Sigmoid colon (tissue), 7 donors: ENCODE measurements at regions of chr6 and their contacts with region 1.

Region 1: DNA sequence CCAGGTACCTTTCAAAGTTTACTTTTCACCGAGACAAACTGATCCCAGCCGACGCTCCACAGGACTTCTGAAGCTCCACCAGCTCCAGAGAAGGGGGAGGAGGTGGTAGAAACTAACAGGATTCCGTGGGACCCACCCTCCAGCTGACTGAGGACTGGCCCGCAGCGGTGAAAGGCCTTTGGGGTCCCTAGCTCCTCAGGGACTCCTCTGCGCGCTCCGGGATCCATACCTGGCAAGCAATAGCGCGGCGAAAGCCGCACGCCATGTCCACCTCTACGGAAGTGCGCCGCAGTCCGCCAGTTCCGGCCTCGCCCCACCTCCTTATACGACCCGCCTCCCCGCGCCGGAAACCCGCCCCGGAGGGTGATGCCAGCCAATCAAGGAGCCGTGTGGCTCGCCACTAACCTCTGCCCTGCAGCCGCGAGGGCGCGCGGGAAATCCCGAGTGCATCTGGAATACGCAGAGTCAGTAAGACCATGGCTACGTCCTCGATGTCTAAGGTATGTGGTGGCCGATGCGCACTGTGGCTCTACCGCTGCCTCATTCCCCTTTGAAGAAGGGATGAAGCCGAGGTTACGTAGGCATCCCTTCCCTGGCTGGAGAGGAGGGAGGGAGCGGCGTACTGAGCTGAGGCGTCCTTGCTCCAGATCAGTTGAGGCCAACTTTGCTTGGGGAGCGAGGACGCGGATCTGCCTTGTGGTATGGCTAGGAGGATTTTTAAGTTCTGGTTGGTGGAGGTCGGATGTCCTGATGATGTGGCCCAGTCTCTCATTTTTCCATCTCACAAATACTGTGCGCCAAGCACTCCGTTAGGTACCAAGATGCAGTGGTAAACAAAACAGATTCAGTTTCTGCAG is at the starts of genes ORC3 and RARS2:
- DNase-seq: peak; percentile 98
- H3K4me3 ChIP-seq: peak within 1 kb of the TSS; percentile 81 to 89 (median 84)
- H3K27ac ChIP-seq: peak within 1 kb of the TSS; percentile 81 to 88 (median 87)
- H3K4me1 ChIP-seq: peaks cover 0 to 50% (median 28%) of the 10 kb centered on the region in 4 donors
- H3K27me3 ChIP-seq: no peaks in the 10 kb centered on the region
- CTCF ChIP-seq: no peak
- EP300 ChIP-seq: no peak
- POLR2A ChIP-seq: peak; percentile 90 to 92
- total RNA-seq, gene ORC3: 17.5 to 27.6 (median 23.7) TPM
- total RNA-seq, gene RARS2: 20.5 to 26.5 (median 20.6) TPM

Region 2: GRCh38 chr6:87146363-87146762 is 443.6 kb before region 1 on chr6:
- intact Hi-C with region 1: loop called (anchors 5 kb)
- DNase-seq: no peak
- H3K4me3 ChIP-seq: no peak overlapping the region
- H3K27ac ChIP-seq: no peak overlapping the region
- H3K4me1 ChIP-seq: peaks cover 0 to 3% (median 3%) of the 10 kb centered on the region in 4 donors
- H3K27me3 ChIP-seq: no peaks in the 10 kb centered on the region
- CTCF ChIP-seq: no peak
- EP300 ChIP-seq: no peak
- POLR2A ChIP-seq: no peak